ENCODE measurements at regions of chr19 and their contacts with region 1.

Region 1: GRCh38 chr19:43465468-43466120 is at the start of gene LYPD3:
- DNase-seq: no peak
- H3K4me3 ChIP-seq: peak within 1 kb of the TSS in 56 of 59 donors; percentile 48 to 87 (median 70)
- H3K27ac ChIP-seq: peak within 1 kb of the TSS in 37 of 59 donors; percentile 2 to 90 (median 80)
- H3K27me3 ChIP-seq: peaks cover 0 to 32% (median 0%) of the 10 kb centered on the region in 45 donors
- CTCF ChIP-seq: no peak
- total RNA-seq, gene LYPD3: 0.26 to 2.0 (median 0.53) TPM in 70 of 120 experiments, not detected in the others

Region 2: DNA sequence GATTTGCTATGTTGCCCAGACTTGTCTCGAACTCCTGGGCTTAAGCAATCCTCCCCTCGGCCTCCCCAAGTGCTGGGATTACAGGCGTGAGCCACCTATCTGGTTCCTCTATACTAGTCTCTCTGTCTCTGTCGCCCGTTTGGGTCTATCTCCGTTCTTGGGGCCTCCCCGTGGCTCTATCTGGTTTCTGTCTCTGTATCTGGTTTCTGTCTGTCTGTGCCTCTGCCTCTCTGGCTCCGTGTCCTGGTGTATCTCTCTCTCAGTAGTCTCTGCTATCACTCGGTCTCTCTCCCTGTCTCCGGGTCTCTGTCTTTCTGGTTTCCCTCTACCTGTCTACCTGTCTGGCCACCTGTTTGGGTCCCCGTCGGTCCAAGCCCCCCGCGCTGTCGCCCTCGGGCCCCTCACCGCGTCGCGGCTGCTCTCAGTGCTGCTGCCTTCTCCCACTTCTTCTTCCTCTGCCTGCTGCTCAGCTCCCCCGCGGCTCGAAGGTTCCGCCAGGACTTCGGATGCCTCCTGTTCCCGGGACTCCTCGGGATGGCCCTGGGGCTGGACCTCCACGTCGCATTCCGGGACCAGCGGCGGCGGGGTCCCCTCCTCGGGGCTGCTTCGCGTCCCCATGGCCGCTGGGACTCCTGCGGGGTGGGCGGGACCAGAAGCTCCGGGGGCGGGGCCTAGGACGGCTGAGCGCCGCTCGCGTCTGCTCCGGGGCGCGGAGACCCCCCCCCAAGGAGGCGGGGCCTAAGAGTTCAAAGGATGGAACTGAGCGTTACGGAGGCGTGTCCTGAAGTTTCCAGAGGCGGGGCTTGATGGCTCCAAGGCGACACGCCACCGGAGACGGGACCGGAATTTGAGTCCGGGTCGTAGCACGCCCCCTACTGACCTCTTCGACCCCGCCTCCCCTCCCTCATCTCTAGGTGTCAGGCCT is 38.2 kb after region 1 on chr19:
- intact Hi-C with region 1: loop called in 1 of 2 experiments (anchors 5 kb)
- DNase-seq: peak; percentile 53 to 96 (median 94)
- H3K4me3 ChIP-seq: peak overlapping the region; percentile 60 to 99 (median 82)
- H3K27ac ChIP-seq: peak overlapping the region in 57 of 59 donors; percentile 14 to 94 (median 79)
- H3K27me3 ChIP-seq: no peaks in the 10 kb centered on the region
- CTCF ChIP-seq: peak in 53 of 56 donors; percentile 25 to 79 (median 51)